HEK293 (cell line): ENCODE measurements at regions of chr9 and their contacts with region 1.

Region 1: DNA sequence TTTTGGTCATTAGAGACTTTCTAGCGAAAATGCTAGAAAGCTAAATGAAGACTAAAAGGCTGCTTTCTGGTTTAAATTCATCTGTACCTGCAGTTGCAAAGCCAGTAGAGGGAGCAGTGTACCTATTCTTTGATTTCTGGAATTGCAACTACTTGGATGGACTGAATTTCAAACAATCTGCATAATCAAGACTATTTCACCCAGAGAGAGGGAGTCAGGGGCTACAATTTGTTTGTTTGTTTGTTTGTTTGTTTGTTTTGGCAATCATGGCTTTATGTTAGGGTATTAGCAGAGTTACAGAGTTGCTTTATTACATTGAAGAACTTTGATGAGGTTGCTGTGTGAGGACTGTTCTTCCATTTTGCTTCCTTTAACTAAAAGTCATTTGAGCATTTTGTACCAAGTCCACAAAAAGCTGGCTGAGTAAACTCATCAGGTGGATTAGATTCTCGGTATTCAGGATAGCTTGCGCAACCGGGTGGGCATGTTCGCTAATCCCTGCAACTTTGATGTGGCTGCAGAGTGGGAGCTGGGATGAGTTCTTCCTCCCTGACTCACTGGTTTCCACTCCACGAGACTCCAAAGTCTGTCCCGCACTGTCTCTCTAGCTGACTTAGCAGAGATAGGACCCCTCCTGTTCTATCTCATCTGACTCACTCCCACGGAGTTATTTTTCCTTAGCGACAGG is 80.0 kb upstream of the TUT7 start:
- H3K4me3 ChIP-seq: no peak overlapping the region; the same call in 1 of the 2 replicates
- H3K27ac ChIP-seq: no peak overlapping the region
- H3K4me1 ChIP-seq: no peaks in the 10 kb centered on the region
- CTCF ChIP-seq: peak; percentile 68; the same call in 1 of the 2 replicates

Region 2: DNA sequence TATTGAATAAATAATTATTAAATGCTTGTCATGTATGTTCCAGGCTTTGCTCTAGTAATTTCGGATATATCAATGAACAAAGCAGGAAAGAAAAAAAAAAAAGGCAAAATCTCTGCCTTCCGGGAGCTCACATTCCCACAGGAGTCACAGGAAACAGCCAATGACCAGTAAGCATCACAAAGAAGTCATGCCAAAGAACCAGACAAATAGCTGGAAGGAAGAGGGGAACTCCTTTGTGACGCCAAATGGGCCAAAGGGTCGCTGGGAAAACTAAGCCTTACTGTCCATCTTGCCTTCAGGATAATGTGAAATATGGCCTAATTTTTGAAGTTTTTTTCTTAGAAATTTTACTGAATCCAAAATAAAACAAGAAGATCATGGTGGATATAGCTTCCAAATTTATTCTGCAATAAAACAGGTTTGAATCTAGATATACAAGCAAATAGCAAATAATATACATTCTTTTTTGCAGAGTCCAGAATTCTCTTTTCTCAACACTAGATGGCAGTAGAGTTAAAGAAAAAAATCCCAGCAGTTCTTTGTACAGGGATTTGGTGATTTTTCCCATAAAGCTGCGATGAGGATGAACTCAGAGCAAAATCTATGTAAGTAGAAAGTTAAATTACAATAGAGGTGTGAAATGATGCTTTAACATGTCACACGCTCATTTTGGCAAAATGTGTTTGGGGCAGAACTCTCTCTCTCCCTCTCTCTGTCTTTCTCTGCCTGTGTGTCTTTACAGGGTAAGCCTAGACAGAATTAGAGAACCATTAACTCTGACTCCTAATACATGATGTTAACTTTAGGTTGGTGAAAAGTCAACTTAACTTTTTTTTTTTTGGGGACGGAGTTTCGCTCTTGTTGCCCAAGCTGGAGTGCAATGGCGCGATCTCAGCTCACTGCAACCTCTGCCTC is 20.0 kb before region 1 on chr9:
- CTCF ChIA-PET with region 1: interaction called, 37 read pairs
- POLR2A ChIA-PET with region 1: no interaction called
- H3K4me3 ChIP-seq: no peak overlapping the region
- H3K27ac ChIP-seq: no peak overlapping the region
- H3K4me1 ChIP-seq: no peaks in the 10 kb centered on the region
- CTCF ChIP-seq: no peak

Region 3: GRCh38 chr9:86454661-86455615 is 20.8 kb after region 1 on chr9:
- CTCF ChIA-PET with region 1: interaction called, 12 read pairs
- POLR2A ChIA-PET with region 1: no interaction called
- H3K4me3 ChIP-seq: no peak overlapping the region
- H3K27ac ChIP-seq: no peak overlapping the region
- H3K4me1 ChIP-seq: no peaks in the 10 kb centered on the region
- CTCF ChIP-seq: no peak

Region 4: GRCh38 chr9:86486891-86487837 is 53.0 kb after region 1 on chr9:
- CTCF ChIA-PET with region 1: interaction called, 31 read pairs
- POLR2A ChIA-PET with region 1: no interaction called
- H3K4me3 ChIP-seq: no peak overlapping the region
- H3K27ac ChIP-seq: no peak overlapping the region
- H3K4me1 ChIP-seq: peaks cover 3% of the 10 kb centered on the region; the same call in 1 of the 2 replicates
- CTCF ChIP-seq: peak; percentile 38; the same call in 1 of the 2 replicates

Region 5: DNA sequence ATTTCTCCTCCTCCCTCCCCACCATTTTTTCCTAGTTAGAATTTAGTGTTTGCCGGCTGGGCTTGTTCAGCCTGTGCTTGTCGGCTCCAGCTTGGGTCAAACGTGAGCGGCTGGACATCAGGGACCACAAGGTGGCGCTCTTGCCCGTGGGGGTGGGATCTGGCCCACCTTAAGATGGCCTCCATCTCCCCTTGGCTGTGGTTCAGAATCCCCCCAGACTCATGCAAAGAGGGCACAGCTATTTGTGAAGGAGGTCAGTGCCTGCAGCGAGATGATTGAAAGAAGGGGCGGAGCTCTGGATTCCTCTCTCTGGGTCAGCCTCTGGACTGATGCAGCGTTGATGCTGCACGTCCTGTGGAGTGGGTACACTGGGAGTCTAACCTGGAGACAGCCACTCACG is 203.3 kb after region 1 on chr9:
- CTCF ChIA-PET with region 1: interaction called, 26 read pairs
- POLR2A ChIA-PET with region 1: no interaction called
- H3K4me3 ChIP-seq: no peak overlapping the region
- H3K27ac ChIP-seq: no peak overlapping the region
- H3K4me1 ChIP-seq: peaks cover 13% of the 10 kb centered on the region
- CTCF ChIP-seq: peak; percentile 55; the same call in 1 of the 2 replicates

Region 6: DNA sequence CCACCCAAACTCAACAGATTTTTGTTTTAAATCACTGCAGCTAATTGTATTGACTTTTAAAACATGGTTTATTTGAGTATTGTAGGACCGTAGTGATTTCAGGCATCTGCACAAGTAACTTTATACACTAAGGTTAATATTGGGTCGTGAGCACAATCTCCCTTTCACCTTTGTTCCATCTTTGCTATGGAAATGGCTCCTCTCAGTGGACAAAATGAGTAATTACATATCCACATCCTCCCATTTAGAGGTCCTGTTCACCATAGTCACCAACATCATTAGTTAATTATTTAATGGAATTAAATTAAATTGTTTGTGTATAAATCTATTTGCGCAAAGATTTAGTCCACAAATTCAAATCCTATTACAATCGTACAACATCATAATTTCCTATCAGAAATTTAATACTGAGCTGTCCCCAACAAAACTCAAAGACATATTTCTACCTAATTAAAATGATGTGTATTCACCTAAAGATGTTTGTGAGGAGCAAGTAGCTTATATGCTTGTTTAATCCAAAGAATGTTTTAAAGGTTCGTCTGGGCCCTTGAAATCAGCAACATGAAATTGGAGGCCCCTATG is 890.5 kb after region 1 on chr9:
- CTCF ChIA-PET with region 1: interaction called, 58 read pairs
- POLR2A ChIA-PET with region 1: no interaction called
- H3K4me3 ChIP-seq: no peak overlapping the region
- H3K27ac ChIP-seq: no peak overlapping the region
- H3K4me1 ChIP-seq: no peaks in the 10 kb centered on the region
- CTCF ChIP-seq: peak; percentile 70